ENCODE measurements at regions of chr2 and their contacts with region 1.

Region 1: GRCh38 chr2:185746531-185746881 is 7.9 kb downstream of the FSIP2 start:
- DNase-seq: peak; percentile 92
- ATAC-seq: peak; percentile 94
- H3K4me3 ChIP-seq: peak overlapping the region; percentile 57
- H3K27ac ChIP-seq: peak overlapping the region; percentile 91
- H3K4me1 ChIP-seq: peaks cover 21% of the 10 kb centered on the region
- H3K27me3 ChIP-seq: no peaks in the 10 kb centered on the region
- CTCF ChIP-seq: no peak

Region 2: GRCh38 chr2:185291035-185291647 is 455.4 kb before region 1 on chr2:
- CTCF ChIA-PET with region 1: no interaction called
- POLR2A ChIA-PET with region 1: no interaction called
- intact Hi-C with region 1: loop called (anchors 10 kb)
- DNase-seq: peak; percentile 79
- ATAC-seq: peak; percentile 100
- H3K4me3 ChIP-seq: no peak overlapping the region
- H3K27ac ChIP-seq: no peak overlapping the region
- H3K4me1 ChIP-seq: no peaks in the 10 kb centered on the region
- H3K27me3 ChIP-seq: no peaks in the 10 kb centered on the region
- CTCF ChIP-seq: peak; percentile 76

Region 3: DNA sequence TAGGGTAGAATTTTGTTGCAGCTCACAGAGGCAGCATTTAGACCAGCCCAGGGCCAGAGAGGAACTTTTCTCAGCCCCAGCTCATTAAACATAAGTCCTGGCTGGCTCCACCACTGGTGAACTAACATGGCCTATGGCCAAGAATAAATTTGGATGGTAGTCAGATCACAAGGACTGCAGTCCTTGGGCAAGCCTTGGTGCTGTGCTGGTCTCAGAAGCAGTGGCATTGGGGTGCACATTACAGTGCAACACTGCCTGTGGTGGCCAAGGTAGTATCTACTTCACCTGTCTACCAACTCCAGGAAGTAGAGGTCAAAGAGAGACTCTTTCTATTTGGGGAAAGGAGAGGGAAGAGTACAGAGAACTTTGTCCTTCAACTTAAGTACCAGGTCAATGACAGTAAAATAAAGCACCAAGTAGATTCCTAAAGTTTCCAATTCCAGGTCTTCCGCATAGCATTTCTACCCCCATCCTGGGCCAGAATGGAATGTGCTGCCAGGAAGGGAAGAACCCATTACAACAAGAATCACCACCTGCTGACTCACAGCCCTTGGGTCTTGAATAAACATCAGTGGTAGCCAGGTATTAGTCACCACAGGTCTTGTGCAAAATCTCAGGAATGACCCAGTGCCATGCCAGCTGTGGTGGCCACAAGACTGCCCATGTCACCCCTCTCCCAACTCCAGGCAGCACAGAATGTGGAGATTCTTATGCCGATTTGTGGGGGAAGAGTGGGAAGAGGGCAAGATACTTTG is 163.3 kb before region 1 on chr2:
- CTCF ChIA-PET with region 1: no interaction called
- POLR2A ChIA-PET with region 1: no interaction called
- intact Hi-C with region 1: loop called (anchors 1 kb)
- DNase-seq: peak; percentile 97
- ATAC-seq: peak; percentile 97
- H3K4me3 ChIP-seq: no peak overlapping the region
- H3K27ac ChIP-seq: peak overlapping the region; percentile 84
- H3K4me1 ChIP-seq: peaks cover 22% of the 10 kb centered on the region
- H3K27me3 ChIP-seq: no peaks in the 10 kb centered on the region
- CTCF ChIP-seq: no peak

Region 4: GRCh38 chr2:185608799-185609198 is 137.7 kb before region 1 on chr2:
- CTCF ChIA-PET with region 1: no interaction called
- POLR2A ChIA-PET with region 1: no interaction called
- intact Hi-C with region 1: loop called (anchors 5 kb)
- DNase-seq: peak; percentile 71
- ATAC-seq: peak; percentile 64
- H3K4me3 ChIP-seq: no peak overlapping the region
- H3K27ac ChIP-seq: no peak overlapping the region
- H3K4me1 ChIP-seq: peaks cover 3% of the 10 kb centered on the region; the same call in 1 of the 2 replicates
- H3K27me3 ChIP-seq: no peaks in the 10 kb centered on the region
- CTCF ChIP-seq: peak; percentile 72

Region 5: DNA sequence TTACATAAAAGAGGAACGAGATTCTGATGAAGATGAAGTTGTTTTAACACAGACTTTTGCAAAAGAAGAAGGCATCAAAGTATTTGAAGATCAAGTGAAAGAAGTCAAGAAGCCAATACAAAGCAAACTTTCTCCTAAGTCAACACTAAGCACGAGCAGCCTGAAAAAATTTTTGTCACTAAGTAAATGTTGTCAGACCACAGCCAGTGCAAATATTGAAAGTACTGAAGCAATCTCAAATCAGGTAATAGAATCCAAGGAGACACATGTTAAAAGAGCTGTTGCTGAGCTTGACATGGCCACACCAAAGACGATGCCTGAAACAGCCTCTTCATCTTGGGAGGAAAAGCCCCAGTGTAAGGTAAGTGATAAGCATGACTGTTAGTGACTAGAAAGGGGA is 67.2 kb after region 1 on chr2:
- CTCF ChIA-PET with region 1: no interaction called
- POLR2A ChIA-PET with region 1: no interaction called
- intact Hi-C with region 1: loop called (anchors 2 kb)
- DNase-seq: peak; percentile 64
- ATAC-seq: peak; percentile 95
- H3K4me3 ChIP-seq: no peak overlapping the region
- H3K27ac ChIP-seq: no peak overlapping the region
- H3K4me1 ChIP-seq: 0 out of 2 replicates have a peak, but pooled peaks cover 4% of the 10 kb centered on the region
- H3K27me3 ChIP-seq: no peaks in the 10 kb centered on the region
- CTCF ChIP-seq: no peak

Region 6: DNA sequence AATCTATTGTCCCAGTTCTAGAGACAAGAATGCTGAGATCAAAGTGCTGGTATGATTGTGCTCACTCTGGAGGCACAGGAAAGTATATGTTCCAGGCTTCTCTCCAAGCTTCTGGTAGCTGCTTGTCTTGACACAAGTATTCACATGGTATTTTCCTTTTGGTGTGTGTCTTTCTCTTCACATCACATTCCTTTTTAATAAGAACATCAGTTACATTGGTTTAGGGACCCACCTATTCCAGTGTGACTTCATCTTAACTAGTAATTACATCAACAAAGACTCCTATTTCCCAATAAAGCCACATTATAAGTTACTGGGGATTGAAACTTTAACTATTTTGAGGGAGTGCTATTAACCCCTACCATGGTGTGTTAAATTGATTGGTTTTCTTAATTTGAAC is 111.2 kb after region 1 on chr2:
- CTCF ChIA-PET with region 1: no interaction called
- POLR2A ChIA-PET with region 1: no interaction called
- intact Hi-C with region 1: loop called (anchors 5 kb)
- DNase-seq: no peak
- ATAC-seq: no peak
- H3K4me3 ChIP-seq: no peak overlapping the region
- H3K27ac ChIP-seq: no peak overlapping the region
- H3K4me1 ChIP-seq: peaks cover 9% of the 10 kb centered on the region
- H3K27me3 ChIP-seq: no peaks in the 10 kb centered on the region
- CTCF ChIP-seq: no peak

Region 7: GRCh38 chr2:186129767-186130581 is 383.5 kb after region 1 on chr2:
- CTCF ChIA-PET with region 1: interaction called, 3 read pairs
- POLR2A ChIA-PET with region 1: no interaction called
- intact Hi-C with region 1: loop called (anchors 5 kb)
- DNase-seq: peak; percentile 87
- ATAC-seq: peak; percentile 75
- H3K4me3 ChIP-seq: peak overlapping the region; percentile 40; the same call in 1 of the 2 replicates
- H3K27ac ChIP-seq: peak overlapping the region; percentile 87
- H3K4me1 ChIP-seq: peaks cover 47% of the 10 kb centered on the region
- H3K27me3 ChIP-seq: no peaks in the 10 kb centered on the region
- CTCF ChIP-seq: no peak